ENCODE measurements at regions of chr3 and their contacts with region 1.

Region 1: DNA sequence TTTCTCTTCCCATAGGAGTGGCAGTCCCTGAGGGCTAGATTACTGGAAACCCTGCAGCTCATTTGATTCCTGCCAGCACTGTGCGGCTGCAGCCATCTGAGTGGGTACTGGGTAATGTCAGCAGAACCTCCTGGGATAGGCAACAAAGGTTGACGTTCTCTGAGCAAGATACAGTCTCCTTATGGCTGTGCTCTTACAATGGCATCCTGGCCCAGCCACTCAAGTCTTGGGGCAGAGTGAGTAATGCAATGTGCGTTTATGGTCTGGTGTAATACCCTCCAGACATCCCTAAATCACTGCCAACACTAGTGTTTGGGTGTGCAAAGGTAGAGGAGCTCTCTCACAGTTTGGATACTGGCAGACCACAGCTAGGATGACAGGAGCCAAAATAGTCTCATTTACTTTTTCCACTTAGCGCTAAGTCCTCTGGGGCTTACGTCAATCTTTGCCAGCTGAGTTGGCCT is 775.8 kb downstream of the ZNF385D start:
- DNase-seq: no peak
- H3K4me3 ChIP-seq: no peak overlapping the region
- CTCF ChIP-seq: no peak

Region 2: DNA sequence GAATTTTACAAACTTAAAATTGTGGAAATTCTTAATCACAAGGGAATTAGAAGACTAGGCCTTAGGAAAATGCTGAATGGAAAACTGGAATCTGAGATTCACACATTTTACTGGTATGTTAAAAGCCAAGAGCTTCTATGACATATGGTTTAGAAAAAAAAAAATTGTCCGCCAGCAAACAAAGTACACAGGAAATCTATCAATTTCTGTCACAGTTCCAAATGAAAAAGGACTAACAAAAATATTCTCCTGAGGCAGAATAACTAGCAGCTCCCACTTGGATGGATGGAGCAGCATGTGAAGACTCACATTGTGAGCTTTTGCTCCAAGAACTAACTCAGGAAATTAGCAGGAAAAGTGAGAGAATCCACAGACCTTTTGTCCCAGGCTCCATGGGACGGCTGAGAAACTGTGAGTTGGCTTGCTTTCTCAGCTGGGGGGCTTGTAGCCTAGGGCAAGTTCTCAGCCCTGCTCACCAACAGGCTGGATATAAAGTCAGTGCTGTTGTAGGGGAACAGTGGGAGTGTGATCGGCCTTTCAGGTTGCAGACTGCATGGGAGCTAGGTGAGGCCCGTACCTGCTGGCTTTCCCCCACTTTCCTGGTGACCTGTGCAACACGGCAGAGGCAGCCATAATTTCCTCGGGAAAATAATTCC is 58.1 kb before region 1 on chr3:
- in situ Hi-C with region 1: loop called (anchors 10 kb)
- DNase-seq: no peak
- H3K4me3 ChIP-seq: no peak overlapping the region
- CTCF ChIP-seq: no peak